Lower lobe of right lung (tissue), 2 donors: ENCODE measurements at regions of chr3 and their contacts with region 1.

Region 1: GRCh38 chr3:43286115-43286840 is at the start of gene SNRK:
- DNase-seq: peak; percentile 90
- ATAC-seq: peak; percentile 97 to 98
- H3K4me3 ChIP-seq: peak within 1 kb of the TSS; percentile 70
- H3K27ac ChIP-seq: peak within 1 kb of the TSS; percentile 87
- H3K4me1 ChIP-seq: peaks cover 42% of the 10 kb centered on the region
- H3K27me3 ChIP-seq: no peaks in the 10 kb centered on the region
- CTCF ChIP-seq: peak; percentile 49
- total RNA-seq, gene SNRK: 55.1 TPM

Region 2: GRCh38 chr3:43178891-43179366 is 107.3 kb before region 1 on chr3:
- intact Hi-C with region 1: loop called (anchors 10 kb)
- DNase-seq: no peak
- ATAC-seq: peak in 1 of 2 donors; percentile 29
- H3K4me3 ChIP-seq: no peak overlapping the region
- H3K27ac ChIP-seq: peak overlapping the region; percentile 74
- H3K4me1 ChIP-seq: peaks cover 45% of the 10 kb centered on the region
- H3K27me3 ChIP-seq: no peaks in the 10 kb centered on the region
- CTCF ChIP-seq: no peak

Region 3: GRCh38 chr3:44584646-44585501 is 1298.6 kb after region 1 on chr3 and contains the start of gene ZNF660:
- intact Hi-C with region 1: no loop called
- DNase-seq: peak; percentile 64
- ATAC-seq: peak; percentile 93 to 96
- H3K4me3 ChIP-seq: peak within 1 kb of the TSS; percentile 68
- H3K27ac ChIP-seq: peak within 1 kb of the TSS; percentile 64
- H3K4me1 ChIP-seq: no peaks in the 10 kb centered on the region
- H3K27me3 ChIP-seq: no peaks in the 10 kb centered on the region
- CTCF ChIP-seq: no peak
- total RNA-seq, gene ZNF660: 2.7 TPM